ENCODE measurements at regions of chr17 and their contacts with region 1.

Region 1: DNA sequence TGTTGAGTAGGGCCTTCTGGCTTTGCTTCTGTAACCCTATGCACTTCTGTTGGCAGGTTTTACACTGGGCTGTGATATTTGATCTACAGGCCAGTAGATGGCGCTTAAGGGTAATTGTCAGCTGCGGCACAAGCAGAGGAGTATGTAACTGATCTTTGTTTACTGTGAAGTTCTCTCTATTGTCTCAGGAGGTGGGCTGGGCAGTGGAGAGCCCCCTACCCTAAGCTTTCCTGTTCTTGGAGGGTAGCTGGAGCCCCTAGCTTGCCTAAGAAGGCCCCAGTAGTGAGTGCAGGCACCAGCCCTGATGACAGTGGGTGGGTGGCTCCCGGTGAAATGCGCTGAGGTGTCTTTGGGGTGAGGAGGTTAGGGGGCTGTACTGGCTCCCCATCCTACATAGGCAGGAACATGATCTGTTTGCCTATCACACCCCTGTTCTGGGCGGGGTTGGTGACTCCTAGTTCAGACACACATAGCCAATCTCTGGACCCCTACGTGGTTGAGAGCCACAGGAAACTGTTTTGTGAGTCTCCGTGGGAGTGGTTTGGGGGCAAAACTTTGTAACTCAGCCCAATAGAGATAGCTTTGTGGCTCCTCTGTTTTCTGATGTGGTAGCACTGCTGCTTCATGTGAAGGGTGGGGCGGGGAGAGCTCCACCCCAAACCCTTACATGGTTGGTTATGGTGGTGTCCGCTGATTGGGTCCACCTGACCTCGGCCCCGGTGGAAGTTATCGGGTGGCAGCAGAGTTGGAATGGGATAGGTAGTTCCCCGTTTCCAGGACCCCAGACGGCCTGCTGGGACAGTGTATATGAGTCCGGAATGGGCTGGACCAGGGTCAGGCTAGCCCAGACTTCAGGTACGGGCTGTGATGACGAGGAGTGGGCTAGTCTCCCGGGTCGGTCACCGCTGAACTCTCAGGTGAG is 60.4 kb downstream of the SLFN11 start:
- DNase-seq: peak; percentile 95
- ATAC-seq: peak; percentile 91
- H3K4me3 Mint-ChIP-seq: peak overlapping the region; percentile 91
- H3K27ac Mint-ChIP-seq: peak overlapping the region; percentile 93
- H3K4me1 Mint-ChIP-seq: peaks cover 42% of the 10 kb centered on the region
- H3K27me3 Mint-ChIP-seq: no peaks in the 10 kb centered on the region

Region 2: GRCh38 chr17:35170968-35171771 is 141.9 kb before region 1 on chr17:
- CTCF ChIA-PET with region 1: interaction called, 12 read pairs
- DNase-seq: peak; percentile 52
- ATAC-seq: peak; percentile 78
- H3K4me3 Mint-ChIP-seq: no peak overlapping the region
- H3K27ac Mint-ChIP-seq: peak overlapping the region; percentile 65
- H3K4me1 Mint-ChIP-seq: peaks cover 22% of the 10 kb centered on the region
- H3K27me3 Mint-ChIP-seq: no peaks in the 10 kb centered on the region

Region 3: GRCh38 chr17:35299129-35299528 is 13.9 kb before region 1 on chr17:
- CTCF ChIA-PET with region 1: interaction called, 12 read pairs
- DNase-seq: no peak
- ATAC-seq: no peak
- H3K4me3 Mint-ChIP-seq: no peak overlapping the region
- H3K27ac Mint-ChIP-seq: no peak overlapping the region
- H3K4me1 Mint-ChIP-seq: no peaks in the 10 kb centered on the region
- H3K27me3 Mint-ChIP-seq: peaks cover 11% of the 10 kb centered on the region

Region 4: DNA sequence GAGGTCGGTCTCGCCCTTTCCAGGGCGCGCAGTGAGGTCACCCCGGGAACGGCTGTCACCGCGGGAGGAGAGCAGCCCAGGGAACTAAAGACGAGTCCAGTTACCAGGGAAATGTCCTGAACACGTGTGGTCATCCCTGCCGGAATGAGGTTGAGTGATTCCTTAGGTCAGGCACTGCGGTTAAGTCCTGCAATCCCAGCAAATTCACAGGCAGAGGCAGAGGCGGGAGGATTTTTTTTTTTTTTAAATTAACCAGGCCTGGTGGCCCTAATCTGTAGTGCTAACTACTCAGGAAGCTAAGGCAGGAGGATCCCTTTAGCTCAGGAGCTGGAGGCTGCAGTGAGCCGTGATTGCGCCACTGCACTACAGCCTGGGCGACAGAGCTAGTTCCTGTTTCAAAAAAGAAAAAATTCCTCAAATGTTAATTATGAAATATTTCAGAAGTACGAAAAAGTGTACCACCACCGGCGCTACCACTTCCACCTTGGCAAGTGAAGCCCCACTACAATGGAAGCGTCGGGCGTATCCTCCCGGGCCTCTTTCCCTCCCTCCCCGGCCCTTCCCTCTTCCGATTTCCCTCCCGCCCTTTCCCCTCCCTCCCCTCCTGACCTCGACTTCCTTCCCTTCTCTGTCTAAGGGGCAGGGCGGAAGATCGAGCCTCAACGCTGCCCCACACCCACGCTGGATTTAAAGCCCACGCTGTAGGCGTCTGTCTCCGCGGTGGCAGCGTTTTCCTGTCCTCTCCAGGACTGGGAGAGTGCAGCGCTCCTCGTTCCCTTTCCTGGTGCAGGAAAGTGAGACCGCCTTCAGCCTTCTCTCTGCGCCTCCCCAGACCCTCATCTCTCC is 33.1 kb after region 1 on chr17:
- CTCF ChIA-PET with region 1: interaction called, 10 read pairs
- DNase-seq: peak; percentile 56
- ATAC-seq: peak; percentile 65
- H3K4me3 Mint-ChIP-seq: peak overlapping the region; percentile 80
- H3K27ac Mint-ChIP-seq: peak overlapping the region; percentile 61
- H3K4me1 Mint-ChIP-seq: peaks cover 60% of the 10 kb centered on the region
- H3K27me3 Mint-ChIP-seq: peaks cover 24% of the 10 kb centered on the region

Region 5: GRCh38 chr17:35432176-35433074 is 119.4 kb after region 1 on chr17 and contains the start of gene SLFN12:
- CTCF ChIA-PET with region 1: interaction called, 12 read pairs
- DNase-seq: peak; percentile 76
- ATAC-seq: peak; percentile 86
- H3K4me3 Mint-ChIP-seq: peak within 1 kb of the TSS; percentile 92
- H3K27ac Mint-ChIP-seq: peak within 1 kb of the TSS; percentile 89
- H3K4me1 Mint-ChIP-seq: peaks cover 64% of the 10 kb centered on the region
- H3K27me3 Mint-ChIP-seq: no peaks in the 10 kb centered on the region
- total RNA-seq, gene SLFN12: 22.6 to 31.6 TPM

Region 6: DNA sequence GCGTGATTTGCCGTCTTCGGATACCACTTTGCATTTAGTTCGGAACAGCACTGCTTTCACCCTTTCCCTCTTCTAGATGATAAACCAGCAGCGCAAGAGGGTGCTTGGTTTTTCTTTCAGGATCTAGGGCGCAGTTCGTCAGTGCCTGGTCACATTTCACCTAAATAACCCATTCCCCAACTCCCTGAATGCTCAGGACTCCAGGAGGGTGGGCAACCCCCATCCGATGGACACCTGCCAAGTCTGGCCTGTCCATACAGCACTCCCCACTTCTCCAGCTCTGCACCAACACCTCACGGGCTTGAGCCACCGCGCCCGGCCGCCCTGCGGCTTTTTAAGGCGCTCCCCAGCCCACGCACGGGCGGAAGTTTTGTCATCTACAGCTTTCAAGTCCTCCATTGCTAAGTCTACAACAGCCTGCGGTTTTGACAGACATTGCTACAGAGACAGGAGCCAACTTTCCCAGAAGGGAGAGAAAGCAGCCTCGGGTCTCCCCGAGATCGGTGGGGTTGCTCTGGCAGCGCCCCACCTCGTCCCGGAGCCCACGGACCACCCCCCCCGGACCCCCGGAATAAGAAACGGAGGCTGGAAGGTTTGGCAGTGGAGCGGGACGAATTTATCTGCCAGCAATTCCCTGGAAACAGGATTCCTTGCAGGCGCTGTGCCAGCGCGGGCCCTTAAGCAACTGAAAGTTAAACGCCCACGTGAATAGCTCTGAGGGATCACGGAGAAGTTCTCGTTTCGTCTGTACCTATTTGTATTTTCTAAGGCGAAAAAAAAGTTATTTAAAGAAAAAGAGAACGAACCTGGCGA is 174.1 kb after region 1 on chr17:
- CTCF ChIA-PET with region 1: interaction called, 27 read pairs
- DNase-seq: peak; percentile 83
- ATAC-seq: peak; percentile 63
- H3K4me3 Mint-ChIP-seq: peak overlapping the region; percentile 73
- H3K27ac Mint-ChIP-seq: peak overlapping the region; percentile 79
- H3K4me1 Mint-ChIP-seq: peaks cover 59% of the 10 kb centered on the region
- H3K27me3 Mint-ChIP-seq: no peaks in the 10 kb centered on the region

Region 7: DNA sequence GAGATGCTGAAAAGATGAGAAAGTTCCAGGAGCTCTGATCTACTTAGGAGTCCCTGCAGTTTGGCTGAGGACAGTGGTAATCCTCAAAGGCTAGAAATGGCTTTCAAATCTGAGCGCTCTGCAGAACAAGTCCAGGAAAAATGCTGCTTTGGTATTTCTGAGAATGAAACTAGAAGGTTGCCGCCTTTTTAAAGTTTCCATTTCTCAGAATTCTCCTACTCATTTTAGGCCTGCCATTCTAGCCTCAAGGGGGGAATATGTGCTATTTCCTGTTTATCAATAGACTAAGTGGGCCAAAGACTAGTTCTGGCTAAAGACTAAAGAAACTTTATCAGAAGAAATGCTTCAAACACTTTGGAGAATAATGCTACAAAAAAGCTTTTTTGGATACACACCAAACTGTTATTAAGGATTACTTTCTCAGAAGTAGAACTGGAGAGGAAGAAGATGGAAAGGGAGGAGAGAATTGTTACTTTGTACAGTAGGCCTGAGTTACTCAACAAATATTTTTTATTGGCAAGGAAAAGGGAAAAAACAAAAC is 224.6 kb after region 1 on chr17 and contains the start of gene SLFN12L:
- CTCF ChIA-PET with region 1: interaction called, 84 read pairs
- DNase-seq: peak; percentile 79
- ATAC-seq: peak; percentile 62
- H3K4me3 Mint-ChIP-seq: peak within 1 kb of the TSS; percentile 90
- H3K27ac Mint-ChIP-seq: peak within 1 kb of the TSS; percentile 99
- H3K4me1 Mint-ChIP-seq: peaks cover 42% of the 10 kb centered on the region
- H3K27me3 Mint-ChIP-seq: no peaks in the 10 kb centered on the region
- total RNA-seq, gene SLFN12L: 95.4 to 197 TPM

Measured in activated CD8-positive, alpha-beta memory T cell treated with anti-CD3 and anti-CD28 coated beads, Interleukin-2, amount 10 ng/mL, durations not matched to agents 7 days and 5 days (primary cell).